ENCODE measurements at regions of chr17 and their contacts with region 1.

Region 1: GRCh38 chr17:45021607-45022287 is 29.7 kb downstream of the DCAKD start:
- DNase-seq: peak; percentile 35 to 82 (median 61)
- ATAC-seq: peak; percentile 87
- H3K4me3 ChIP-seq: peak overlapping the region; percentile 40 to 42
- H3K4me3 Mint-ChIP-seq: peak overlapping the region; percentile 59
- H3K27ac ChIP-seq: no peak overlapping the region
- H3K27ac Mint-ChIP-seq: no peak overlapping the region
- H3K4me1 ChIP-seq: peaks cover 20% of the 10 kb centered on the region
- H3K4me1 Mint-ChIP-seq: peaks cover 21% of the 10 kb centered on the region
- H3K27me3 ChIP-seq: peaks cover 20 to 21% of the 10 kb centered on the region in 2 experiments
- H3K27me3 Mint-ChIP-seq: peaks cover 37% of the 10 kb centered on the region
- CTCF ChIP-seq: peak; percentile 90

Region 2: GRCh38 chr17:44807817-44808155 is 214.0 kb before region 1 on chr17:
- CTCF ChIA-PET with region 1: no interaction called
- POLR2A ChIA-PET with region 1: no interaction called
- intact Hi-C with region 1: no loop called
- DNase-seq: no peak
- ATAC-seq: no peak
- H3K4me3 ChIP-seq: no peak overlapping the region
- H3K4me3 Mint-ChIP-seq: no peak overlapping the region
- H3K27ac ChIP-seq: no peak overlapping the region
- H3K27ac Mint-ChIP-seq: no peak overlapping the region
- H3K4me1 ChIP-seq: no peaks in the 10 kb centered on the region
- H3K4me1 Mint-ChIP-seq: no peaks in the 10 kb centered on the region
- H3K27me3 ChIP-seq: no peaks in the 10 kb centered on the region
- H3K27me3 Mint-ChIP-seq: peaks cover 9% of the 10 kb centered on the region
- CTCF ChIP-seq: no peak

Region 3: DNA sequence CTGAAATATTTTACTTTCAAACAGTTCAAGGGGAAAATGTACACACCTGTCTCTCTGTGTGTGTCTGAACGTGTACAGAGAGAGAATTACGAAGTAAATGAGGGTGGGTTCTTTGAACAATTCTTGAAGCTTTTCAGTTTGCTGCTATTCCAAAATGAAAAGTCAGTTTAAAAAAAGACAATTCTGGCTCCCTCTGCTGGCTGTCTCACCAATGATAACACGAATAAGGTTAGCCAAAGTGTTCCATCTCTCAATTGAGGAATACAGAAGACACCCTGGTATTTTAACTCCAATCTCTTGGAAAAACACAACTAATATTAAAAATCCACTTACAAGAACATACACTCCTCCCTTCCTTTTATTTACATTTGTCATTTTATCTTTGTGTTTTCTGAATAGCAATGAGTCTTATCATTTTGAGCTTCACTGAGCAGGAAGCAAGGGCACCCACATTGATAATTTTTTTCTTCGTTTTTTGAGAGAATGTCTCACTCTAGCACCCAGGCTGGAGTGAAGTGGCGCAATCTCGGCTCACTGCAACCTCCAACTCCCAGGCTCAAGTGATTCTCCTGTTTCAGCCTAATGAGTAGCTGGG is 143.0 kb before region 1 on chr17:
- CTCF ChIA-PET with region 1: interaction called, 13 read pairs
- POLR2A ChIA-PET with region 1: no interaction called
- intact Hi-C with region 1: no loop called
- DNase-seq: peak in 5 of 9 experiments; percentile 19 to 44 (median 27)
- ATAC-seq: no peak
- H3K4me3 ChIP-seq: no peak overlapping the region
- H3K4me3 Mint-ChIP-seq: no peak overlapping the region
- H3K27ac ChIP-seq: no peak overlapping the region
- H3K27ac Mint-ChIP-seq: no peak overlapping the region
- H3K4me1 ChIP-seq: no peaks in the 10 kb centered on the region
- H3K4me1 Mint-ChIP-seq: no peaks in the 10 kb centered on the region
- H3K27me3 ChIP-seq: no peaks in the 10 kb centered on the region
- H3K27me3 Mint-ChIP-seq: no peaks in the 10 kb centered on the region
- CTCF ChIP-seq: peak; percentile 34

Region 4: GRCh38 chr17:44911133-44912001 is 110.4 kb before region 1 on chr17:
- CTCF ChIA-PET with region 1: interaction called, 14 read pairs
- POLR2A ChIA-PET with region 1: no interaction called
- intact Hi-C with region 1: no loop called
- DNase-seq: peak in 8 of 9 experiments; percentile 32 to 68 (median 55)
- ATAC-seq: peak; percentile 44
- H3K4me3 ChIP-seq: peak overlapping the region in 1 of 2 experiments; percentile 28
- H3K4me3 Mint-ChIP-seq: peak overlapping the region; percentile 67
- H3K27ac ChIP-seq: no peak overlapping the region
- H3K27ac Mint-ChIP-seq: no peak overlapping the region
- H3K4me1 ChIP-seq: no peaks in the 10 kb centered on the region
- H3K4me1 Mint-ChIP-seq: peaks cover 7% of the 10 kb centered on the region
- H3K27me3 ChIP-seq: peaks cover 0 to 3% of the 10 kb centered on the region in 2 experiments
- H3K27me3 Mint-ChIP-seq: peaks cover 28% of the 10 kb centered on the region
- CTCF ChIP-seq: no peak

Region 5: DNA sequence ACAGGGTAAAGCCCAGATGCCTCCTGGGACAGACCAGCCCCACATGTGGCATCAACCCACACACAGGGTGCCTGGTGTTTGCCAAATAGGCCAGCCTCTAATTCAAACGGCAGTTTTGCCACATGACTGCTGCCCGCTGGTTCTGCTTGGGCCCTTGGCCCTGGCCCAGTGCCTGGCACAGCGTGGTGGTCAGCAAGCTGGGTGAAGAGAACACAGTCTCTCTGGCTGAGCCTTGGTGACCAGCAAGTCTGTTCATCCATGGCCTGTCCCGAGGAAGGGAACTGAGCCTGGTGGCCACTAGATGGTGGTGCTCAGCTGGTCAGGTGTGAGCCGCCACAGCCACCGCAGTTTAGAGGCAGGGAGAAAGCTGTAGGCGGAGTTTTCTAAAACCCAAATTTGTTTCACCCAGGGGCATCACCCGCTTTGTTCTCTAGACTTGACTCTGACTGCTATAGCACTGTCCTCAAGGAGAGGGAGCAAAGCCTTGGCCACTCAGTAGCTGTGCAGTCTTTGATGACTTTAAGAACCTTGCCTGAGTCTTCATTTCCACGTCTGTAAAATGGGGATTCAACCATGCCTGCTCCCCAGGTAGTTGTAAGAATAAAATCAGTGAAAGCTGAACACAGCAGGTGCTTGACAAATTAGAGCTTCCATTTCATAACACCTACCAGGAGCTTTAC is 101.7 kb before region 1 on chr17:
- CTCF ChIA-PET with region 1: interaction called, 95 read pairs
- POLR2A ChIA-PET with region 1: no interaction called
- intact Hi-C with region 1: loop called (anchors 1 kb)
- DNase-seq: peak; percentile 19 to 70 (median 52)
- ATAC-seq: peak; percentile 91
- H3K4me3 ChIP-seq: no peak overlapping the region
- H3K4me3 Mint-ChIP-seq: no peak overlapping the region
- H3K27ac ChIP-seq: no peak overlapping the region
- H3K27ac Mint-ChIP-seq: no peak overlapping the region
- H3K4me1 ChIP-seq: no peaks in the 10 kb centered on the region
- H3K4me1 Mint-ChIP-seq: no peaks in the 10 kb centered on the region
- H3K27me3 ChIP-seq: peaks cover 4% of the 10 kb centered on the region in 2 experiments
- H3K27me3 Mint-ChIP-seq: peaks cover 11% of the 10 kb centered on the region
- CTCF ChIP-seq: peak; percentile 32

Region 6: GRCh38 chr17:44947461-44948314 is 74.1 kb before region 1 on chr17 and contains the start of gene KIF18B:
- CTCF ChIA-PET with region 1: interaction called, 4 read pairs
- POLR2A ChIA-PET with region 1: no interaction called
- intact Hi-C with region 1: loop called in 1 of 2 experiments (anchors 2 kb)
- DNase-seq: peak; percentile 72 to 94 (median 87)
- ATAC-seq: peak; percentile 97
- H3K4me3 ChIP-seq: peak within 1 kb of the TSS; percentile 57 to 68
- H3K4me3 Mint-ChIP-seq: peak within 1 kb of the TSS; percentile 93
- H3K27ac ChIP-seq: peak within 1 kb of the TSS; percentile 47 to 67
- H3K27ac Mint-ChIP-seq: peak within 1 kb of the TSS; percentile 93
- H3K4me1 ChIP-seq: peaks cover 9% of the 10 kb centered on the region
- H3K4me1 Mint-ChIP-seq: peaks cover 13% of the 10 kb centered on the region
- H3K27me3 ChIP-seq: peaks cover 0 to 5% of the 10 kb centered on the region in 2 experiments
- H3K27me3 Mint-ChIP-seq: peaks cover 5% of the 10 kb centered on the region
- CTCF ChIP-seq: no peak
- total RNA-seq, gene KIF18B: 0.11 TPM in 1 of 2 experiments, not detected in the other

Measured in CD8-positive, alpha-beta T cell (primary cell).